Activated T-helper 2 cell treated with anti-CD3 and anti-CD28 coated beads, Interferon-gamma antibody, Interleukin-2, Interleukin-4, amounts not matched to agents 10 μg/mL and 5 μg/mL and 100 μg/mL, durations not matched to agents 14 hours and 24 hours and 36 hours (primary cell): ENCODE measurements at regions of chr3 and their contacts with region 1.

Region 1: GRCh38 chr3:188914552-188914951 is 257.2 kb upstream of the TPRG1 start:
- DNase-seq: no peak
- H3K4me3 Mint-ChIP-seq: no peak overlapping the region
- H3K27ac Mint-ChIP-seq: peak overlapping the region; percentile 83
- H3K4me1 Mint-ChIP-seq: peaks cover 42% of the 10 kb centered on the region
- H3K27me3 Mint-ChIP-seq: peaks cover 3% of the 10 kb centered on the region

Region 2: DNA sequence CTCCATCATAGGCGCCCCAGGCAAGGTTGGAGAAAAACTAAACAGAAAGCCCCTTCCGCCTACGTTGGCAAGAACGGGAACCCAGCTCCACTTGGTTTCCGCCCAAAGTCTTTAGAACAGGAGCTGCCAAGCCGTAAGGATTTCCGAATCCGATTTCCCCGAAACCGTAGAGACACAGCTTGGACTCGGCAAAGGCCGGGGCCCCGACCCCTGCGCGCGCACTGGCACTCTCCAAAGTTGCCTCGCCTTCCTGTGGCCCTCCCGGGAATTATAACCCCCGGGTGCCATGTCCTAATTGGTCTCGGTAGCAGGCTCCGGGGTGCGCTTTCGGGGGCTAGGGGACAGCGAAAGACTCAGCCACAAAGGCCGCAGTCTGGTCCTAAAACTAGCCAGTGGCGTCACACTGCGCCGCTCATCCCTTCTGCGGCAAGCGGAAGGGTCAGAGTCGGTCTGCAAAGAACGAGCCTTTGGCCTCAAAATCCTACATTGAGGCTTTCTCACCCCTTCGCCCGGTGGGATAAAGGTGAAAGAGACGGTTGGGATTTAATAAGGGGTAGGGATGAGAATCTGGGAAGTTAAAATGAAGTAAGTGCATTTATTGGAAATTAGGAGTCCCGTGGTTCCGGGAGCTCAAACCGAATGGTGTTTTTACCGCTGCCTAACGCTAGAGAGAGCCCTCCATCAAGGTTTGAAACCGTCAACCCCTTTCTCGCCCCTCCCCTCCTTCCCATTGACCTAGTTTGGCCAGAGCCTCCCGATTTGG is 1176.0 kb before region 1 on chr3:
- intact Hi-C with region 1: loop called (anchors 1 kb)
- DNase-seq: peak; percentile 69
- H3K4me3 Mint-ChIP-seq: peak overlapping the region; percentile 94
- H3K27ac Mint-ChIP-seq: peak overlapping the region; percentile 70
- H3K4me1 Mint-ChIP-seq: peaks cover 38% of the 10 kb centered on the region
- H3K27me3 Mint-ChIP-seq: peaks cover 12% of the 10 kb centered on the region

Region 3: GRCh38 chr3:188154014-188154808 is 760.3 kb before region 1 on chr3 and contains the start of gene LPP:
- intact Hi-C with region 1: loop called (anchors 10 kb)
- DNase-seq: peak; percentile 87
- H3K4me3 Mint-ChIP-seq: peak within 1 kb of the TSS; percentile 91
- H3K27ac Mint-ChIP-seq: peak within 1 kb of the TSS; percentile 93
- H3K4me1 Mint-ChIP-seq: peaks cover 63% of the 10 kb centered on the region
- H3K27me3 Mint-ChIP-seq: no peaks in the 10 kb centered on the region
- total RNA-seq, gene LPP: 54.5 and 59.0 TPM in 2 replicates

Region 4: DNA sequence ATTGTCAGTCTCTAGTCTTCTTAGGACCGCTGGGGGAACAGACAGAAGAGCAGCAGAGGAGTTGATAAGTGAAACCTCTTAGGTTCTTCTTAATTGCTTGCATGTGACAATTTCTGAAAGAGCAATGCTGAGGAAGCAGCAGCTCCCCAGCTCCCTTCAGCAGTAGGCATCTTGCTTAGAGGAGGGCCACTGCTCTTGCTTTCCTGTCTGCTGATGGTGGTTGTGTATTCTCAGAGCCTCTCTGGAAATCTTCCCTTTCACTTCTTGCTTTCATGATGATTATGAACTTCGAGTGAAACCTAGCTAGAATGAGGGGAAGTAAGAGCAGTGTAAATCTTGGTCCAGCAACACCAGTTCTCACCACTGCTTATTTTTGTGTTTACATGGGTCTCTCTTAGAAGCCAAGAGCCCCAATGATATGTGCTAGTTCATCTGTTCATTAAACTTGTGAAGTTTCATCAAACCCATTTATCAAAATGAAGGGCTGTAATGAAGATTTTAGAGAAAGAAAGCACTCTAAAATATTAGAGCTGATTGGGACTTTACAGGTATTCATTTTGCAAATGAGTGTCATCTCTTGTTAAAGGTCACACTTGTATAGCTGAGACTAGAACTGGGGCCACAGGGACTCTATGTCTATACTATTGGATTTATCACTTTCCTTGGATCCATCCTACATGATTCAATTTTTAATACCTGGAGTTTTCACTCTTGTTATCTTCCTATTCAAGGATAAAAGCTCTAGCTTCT is 513.9 kb before region 1 on chr3:
- intact Hi-C with region 1: loop called (anchors 5 kb)
- DNase-seq: peak; percentile 22
- H3K4me3 Mint-ChIP-seq: no peak overlapping the region
- H3K27ac Mint-ChIP-seq: peak overlapping the region; percentile 38
- H3K4me1 Mint-ChIP-seq: peaks cover 70% of the 10 kb centered on the region
- H3K27me3 Mint-ChIP-seq: no peaks in the 10 kb centered on the region

Region 5: DNA sequence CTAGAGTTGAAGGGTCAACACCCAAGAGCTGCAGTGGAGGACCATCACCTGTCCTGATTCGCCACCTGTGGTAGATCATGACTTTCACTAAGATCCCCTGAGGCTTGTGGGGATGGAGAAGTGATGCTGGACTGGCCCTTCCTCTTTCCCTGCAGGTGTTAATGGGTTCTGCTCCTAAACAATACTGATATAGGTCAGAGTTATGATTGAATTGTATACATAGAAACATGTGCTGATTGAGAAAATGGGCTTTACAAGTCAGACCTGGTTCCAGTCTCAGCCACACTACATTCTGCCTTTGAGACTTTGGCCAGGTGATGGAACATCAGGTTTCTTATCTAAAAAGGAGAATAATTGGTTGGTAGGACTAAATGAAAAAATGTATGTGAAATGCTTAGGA is 161.7 kb before region 1 on chr3:
- intact Hi-C with region 1: loop called (anchors 1 kb)
- DNase-seq: no peak
- H3K4me3 Mint-ChIP-seq: no peak overlapping the region
- H3K27ac Mint-ChIP-seq: no peak overlapping the region
- H3K4me1 Mint-ChIP-seq: peaks cover 19% of the 10 kb centered on the region
- H3K27me3 Mint-ChIP-seq: peaks cover 3% of the 10 kb centered on the region

Region 6: GRCh38 chr3:188782613-188783124 is 131.9 kb before region 1 on chr3:
- intact Hi-C with region 1: no loop called
- DNase-seq: no peak
- H3K4me3 Mint-ChIP-seq: no peak overlapping the region
- H3K27ac Mint-ChIP-seq: no peak overlapping the region
- H3K4me1 Mint-ChIP-seq: peaks cover 8% of the 10 kb centered on the region
- H3K27me3 Mint-ChIP-seq: peaks cover 2% of the 10 kb centered on the region

Region 7: DNA sequence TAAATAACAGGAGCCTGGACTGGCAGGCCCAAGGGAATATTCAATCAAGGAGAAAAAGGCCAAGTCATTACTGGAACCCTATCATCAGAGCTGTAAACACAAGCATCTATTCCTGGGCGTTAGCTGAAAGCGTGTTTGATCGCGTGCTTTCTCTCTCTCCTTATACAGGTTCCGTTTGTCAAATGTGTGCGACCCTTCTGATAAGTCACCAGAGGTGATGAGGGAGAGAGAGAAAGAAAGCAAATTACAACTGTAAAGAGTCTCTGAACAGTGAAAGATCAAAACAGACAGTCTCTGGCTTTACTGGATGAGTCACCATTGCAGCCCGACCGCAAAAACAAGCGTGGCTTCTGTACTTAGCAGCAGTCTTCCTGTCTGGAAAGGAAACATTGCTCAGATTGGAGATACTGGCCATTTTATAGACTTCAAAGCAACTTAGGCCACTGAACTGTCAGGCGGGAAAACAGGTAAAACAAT is 217.7 kb after region 1 on chr3:
- intact Hi-C with region 1: loop called (anchors 2 kb)
- DNase-seq: peak; percentile 79
- H3K4me3 Mint-ChIP-seq: peak overlapping the region; percentile 19
- H3K27ac Mint-ChIP-seq: peak overlapping the region; percentile 89
- H3K4me1 Mint-ChIP-seq: peaks cover 24% of the 10 kb centered on the region
- H3K27me3 Mint-ChIP-seq: no peaks in the 10 kb centered on the region

Region 8: GRCh38 chr3:189298469-189299375 is 384.2 kb after region 1 on chr3:
- intact Hi-C with region 1: no loop called
- DNase-seq: no peak
- H3K4me3 Mint-ChIP-seq: peak overlapping the region; percentile 35
- H3K27ac Mint-ChIP-seq: peak overlapping the region; percentile 91
- H3K4me1 Mint-ChIP-seq: peaks cover 76% of the 10 kb centered on the region
- H3K27me3 Mint-ChIP-seq: no peaks in the 10 kb centered on the region